ENCODE measurements at regions of chr15 and their contacts with region 1.

Region 1: GRCh38 chr15:70875001-70875782 is 17.0 kb downstream of the THAP10 start:
- DNase-seq: no peak
- H3K4me3 ChIP-seq: no peak overlapping the region
- H3K27ac ChIP-seq: no peak overlapping the region
- H3K4me1 ChIP-seq: no peaks in the 10 kb centered on the region
- H3K27me3 ChIP-seq: no peaks in the 10 kb centered on the region
- CTCF ChIP-seq: peak; percentile 16

Region 2: DNA sequence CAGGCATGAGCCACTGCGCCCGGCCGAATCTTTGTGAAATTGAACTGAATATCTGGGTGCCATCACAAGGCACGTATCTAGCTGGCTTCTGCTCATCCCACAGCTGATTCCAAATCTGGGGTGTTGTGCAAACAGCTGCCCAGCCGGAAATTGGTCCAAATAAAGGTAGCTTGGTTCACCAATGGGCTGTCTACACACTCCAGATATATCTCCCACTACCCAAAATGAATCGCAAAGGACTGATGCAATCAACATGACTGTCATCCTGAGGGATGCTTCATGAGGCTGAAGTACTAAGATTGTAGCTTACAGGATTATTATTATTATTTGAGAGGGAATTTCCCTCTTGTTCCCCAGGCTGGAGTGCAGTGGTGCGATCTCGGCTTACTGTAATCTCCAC is 49.4 kb before region 1 on chr15:
- intact Hi-C with region 1: loop called (anchors 2 kb)
- DNase-seq: no peak
- H3K4me3 ChIP-seq: no peak overlapping the region
- H3K27ac ChIP-seq: no peak overlapping the region
- H3K4me1 ChIP-seq: no peaks in the 10 kb centered on the region
- H3K27me3 ChIP-seq: no peaks in the 10 kb centered on the region
- CTCF ChIP-seq: no peak